Panc1 (cell line): ENCODE measurements at regions of chr4 and their contacts with region 1.

Region 1: DNA sequence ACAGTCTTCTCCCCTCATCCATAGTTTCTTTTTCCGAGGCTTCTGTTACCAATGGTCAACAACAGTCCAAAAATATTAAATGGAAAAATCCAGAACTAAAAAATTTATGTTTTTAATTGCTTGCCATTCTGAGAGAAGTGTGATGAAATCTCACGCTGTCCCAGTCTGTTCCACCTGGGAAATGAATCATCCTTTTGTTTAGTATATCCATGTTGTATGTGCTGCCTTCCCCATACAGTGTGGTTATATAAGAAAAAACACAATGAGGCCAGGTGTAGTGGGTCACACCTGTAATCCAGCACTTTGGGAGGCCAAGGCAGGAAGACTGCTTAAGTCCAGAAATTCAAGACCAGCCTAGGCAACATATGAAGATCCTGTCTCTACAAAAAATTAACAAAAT is 161.6 kb downstream of the CHIC2 start:
- DNase-seq: no peak
- ATAC-seq: no peak
- H3K4me3 ChIP-seq: no peak overlapping the region
- H3K27ac ChIP-seq: no peak overlapping the region
- H3K4me1 ChIP-seq: no peaks in the 10 kb centered on the region
- H3K27me3 ChIP-seq: peaks cover 3% of the 10 kb centered on the region; the same call in 1 of the 2 replicates
- CTCF ChIP-seq: no peak

Region 2: DNA sequence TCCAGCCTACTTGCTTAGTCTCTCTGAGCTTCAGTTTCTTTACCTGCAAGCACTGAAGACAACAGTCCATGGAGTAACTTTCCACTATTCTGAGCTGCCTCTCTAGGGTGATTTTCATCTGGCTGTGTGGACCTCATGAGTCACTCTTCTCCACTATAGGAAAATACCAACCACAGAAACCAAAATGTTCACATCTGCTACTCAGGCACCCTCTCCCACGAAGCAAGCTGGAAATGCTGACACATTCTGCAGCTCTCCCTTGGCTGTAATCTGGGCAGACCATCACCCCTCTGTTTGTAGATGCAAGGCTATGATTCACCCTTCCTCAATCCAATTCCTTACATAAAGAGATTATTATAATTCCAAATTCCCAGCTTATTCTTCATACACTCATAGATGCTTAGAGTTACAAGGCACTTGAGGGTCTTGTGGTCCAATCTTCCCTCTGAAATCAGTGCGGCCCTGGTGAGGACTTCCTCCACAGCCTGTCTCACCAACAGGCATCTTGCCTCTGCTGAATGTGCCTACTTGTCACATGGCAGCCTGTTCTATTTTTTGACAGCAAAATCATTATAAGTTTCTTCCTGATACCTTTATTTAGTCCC is 214.5 kb before region 1 on chr4:
- CTCF ChIA-PET with region 1: no interaction called
- POLR2A ChIA-PET with region 1: no interaction called
- in situ Hi-C with region 1: no loop called
- intact Hi-C with region 1: no loop called
- DNase-seq: no peak
- ATAC-seq: no peak; the same call in 1 of the 2 replicates
- H3K4me3 ChIP-seq: no peak overlapping the region
- H3K27ac ChIP-seq: no peak overlapping the region
- H3K4me1 ChIP-seq: no peaks in the 10 kb centered on the region
- H3K27me3 ChIP-seq: no peaks in the 10 kb centered on the region
- CTCF ChIP-seq: no peak

Region 3: GRCh38 chr4:54015423-54016030 is 112.7 kb after region 1 on chr4:
- CTCF ChIA-PET with region 1: no interaction called
- POLR2A ChIA-PET with region 1: no interaction called
- in situ Hi-C with region 1: no loop called
- intact Hi-C with region 1: no loop called
- DNase-seq: no peak
- ATAC-seq: no peak
- H3K4me3 ChIP-seq: no peak overlapping the region
- H3K27ac ChIP-seq: no peak overlapping the region
- H3K4me1 ChIP-seq: no peaks in the 10 kb centered on the region
- H3K27me3 ChIP-seq: no peaks in the 10 kb centered on the region
- CTCF ChIP-seq: no peak

Region 4: GRCh38 chr4:54227256-54228055 is 324.7 kb after region 1 on chr4:
- CTCF ChIA-PET with region 1: no interaction called
- POLR2A ChIA-PET with region 1: no interaction called
- in situ Hi-C with region 1: no loop called
- intact Hi-C with region 1: loop called (anchors 2 kb)
- DNase-seq: peak; percentile 39
- ATAC-seq: peak; percentile 81
- H3K4me3 ChIP-seq: peak overlapping the region; percentile 34 to 54
- H3K27ac ChIP-seq: no peak overlapping the region
- H3K4me1 ChIP-seq: peaks cover 5% of the 10 kb centered on the region; the same call in 1 of the 2 replicates
- H3K27me3 ChIP-seq: peaks cover 11% of the 10 kb centered on the region; the same call in 1 of the 2 replicates
- CTCF ChIP-seq: no peak